ENCODE measurements at regions of chr1 and their contacts with region 1.

Region 1: GRCh38 chr1:29017235-29017634 is 102.9 kb downstream of the EPB41 start:
- DNase-seq: no peak
- ATAC-seq: no peak
- H3K4me3 ChIP-seq: no peak overlapping the region
- H3K27ac ChIP-seq: no peak overlapping the region
- H3K4me1 ChIP-seq: no peaks in the 10 kb centered on the region
- H3K27me3 ChIP-seq: no peaks in the 10 kb centered on the region
- CTCF ChIP-seq: no peak

Region 2: GRCh38 chr1:28811766-28812668 is 205.2 kb before region 1 on chr1 and contains the start of gene OPRD1:
- CTCF ChIA-PET with region 1: no interaction called
- POLR2A ChIA-PET with region 1: no interaction called
- intact Hi-C with region 1: no loop called
- DNase-seq: no peak
- ATAC-seq: no peak
- H3K4me3 ChIP-seq: no peak within 1 kb of the TSS
- H3K27ac ChIP-seq: no peak within 1 kb of the TSS
- H3K4me1 ChIP-seq: no peaks in the 10 kb centered on the region
- H3K27me3 ChIP-seq: peaks cover 49% of the 10 kb centered on the region
- CTCF ChIP-seq: no peak
- total RNA-seq, gene OPRD1: not detected in 2 replicates

Region 3: GRCh38 chr1:28914228-28915030 is 102.8 kb before region 1 on chr1 and contains the start of gene EPB41:
- CTCF ChIA-PET with region 1: no interaction called
- POLR2A ChIA-PET with region 1: no interaction called
- intact Hi-C with region 1: loop called (anchors 5 kb)
- DNase-seq: peak; percentile 92
- ATAC-seq: peak; percentile 88
- H3K4me3 ChIP-seq: peak within 1 kb of the TSS; percentile 75
- H3K27ac ChIP-seq: peak within 1 kb of the TSS; percentile 28
- H3K4me1 ChIP-seq: peaks cover 14% of the 10 kb centered on the region
- H3K27me3 ChIP-seq: no peaks in the 10 kb centered on the region
- CTCF ChIP-seq: no peak
- total RNA-seq, gene EPB41: 41.5 and 44.9 TPM in 2 replicates

Region 4: DNA sequence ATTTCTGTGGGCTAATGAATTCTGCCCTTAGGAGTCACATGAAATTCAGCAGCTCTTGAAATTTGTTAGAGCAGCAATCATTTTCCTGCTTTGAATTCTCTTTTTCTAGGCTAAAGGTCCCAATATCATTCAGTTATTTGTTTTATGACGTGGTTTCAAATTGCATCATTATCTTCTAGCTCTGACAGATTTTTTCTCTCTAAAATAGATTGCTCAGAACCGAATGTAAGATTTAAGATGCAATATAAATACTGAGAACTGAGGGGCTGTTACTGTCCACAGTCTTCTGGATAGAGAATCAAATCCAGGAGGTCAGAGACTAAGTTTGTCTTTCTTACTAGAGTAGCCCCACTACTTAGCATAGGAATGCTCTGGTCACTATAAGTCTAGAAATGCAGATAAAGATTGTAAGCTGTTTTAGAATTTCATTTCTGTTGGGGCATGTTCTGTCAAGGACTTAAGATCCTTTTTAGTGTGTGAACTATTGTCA is 43.3 kb before region 1 on chr1:
- CTCF ChIA-PET with region 1: no interaction called
- POLR2A ChIA-PET with region 1: no interaction called
- intact Hi-C with region 1: no loop called
- DNase-seq: peak; percentile 72
- ATAC-seq: no peak; the same call in 1 of the 2 replicates
- H3K4me3 ChIP-seq: peak overlapping the region; percentile 29; the same call in 1 of the 2 replicates
- H3K27ac ChIP-seq: peak overlapping the region; percentile 82
- H3K4me1 ChIP-seq: peaks cover 32% of the 10 kb centered on the region
- H3K27me3 ChIP-seq: no peaks in the 10 kb centered on the region
- CTCF ChIP-seq: no peak